ENCODE measurements at regions of chr21 and their contacts with region 1.

Region 1: GRCh38 chr21:29298348-29299045 is at the start of gene BACH1:
- DNase-seq: peak; percentile 71 to 92 (median 84)
- ATAC-seq: peak; percentile 67
- H3K4me3 ChIP-seq: peak within 1 kb of the TSS; percentile 63 to 68
- H3K4me3 Mint-ChIP-seq: peak within 1 kb of the TSS; percentile 87
- H3K27ac ChIP-seq: peak within 1 kb of the TSS; percentile 39 to 41
- H3K27ac Mint-ChIP-seq: peak within 1 kb of the TSS; percentile 88
- H3K4me1 ChIP-seq: peaks cover 54% of the 10 kb centered on the region
- H3K4me1 Mint-ChIP-seq: peaks cover 78% of the 10 kb centered on the region
- H3K27me3 ChIP-seq: no peaks in the 10 kb centered on the region
- H3K27me3 Mint-ChIP-seq: no peaks in the 10 kb centered on the region
- CTCF ChIP-seq: peak; percentile 33
- total RNA-seq, gene BACH1: 86.3 to 88.5 TPM

Region 2: DNA sequence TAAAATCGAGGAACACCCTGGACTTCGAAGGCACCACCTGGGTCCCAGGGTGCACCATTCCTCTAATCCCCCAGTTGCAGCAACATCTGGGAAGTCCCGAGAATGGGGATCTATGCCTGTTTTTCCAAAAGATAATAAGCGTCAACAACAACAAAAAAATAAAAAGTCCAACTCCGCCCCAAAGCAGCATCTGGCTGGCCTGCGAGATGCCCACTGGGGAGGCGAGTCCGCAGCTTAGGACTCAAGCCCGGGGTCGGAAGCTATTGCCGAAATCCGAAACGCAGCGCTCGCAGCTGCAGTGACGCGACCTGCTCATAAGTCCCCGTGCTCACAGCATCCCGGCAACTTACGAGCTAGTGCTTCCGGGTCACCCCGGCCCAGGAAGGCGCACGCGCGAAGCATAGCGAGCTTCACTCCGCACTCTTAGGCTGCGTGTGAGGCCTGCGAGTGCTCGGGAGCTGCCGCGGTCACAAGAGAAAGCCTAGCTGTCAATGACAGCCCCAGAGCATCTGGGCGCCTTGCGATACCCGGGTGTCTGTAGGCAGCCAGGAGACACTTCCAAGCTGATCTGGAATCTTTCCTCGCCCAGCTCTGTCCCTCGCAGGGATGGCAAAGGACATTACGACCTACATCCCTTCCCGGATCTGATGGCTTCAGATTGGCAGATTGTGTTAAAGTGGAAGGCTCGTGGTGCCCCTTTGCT is 295.9 kb before region 1 on chr21:
- CTCF ChIA-PET with region 1: no interaction called
- POLR2A ChIA-PET with region 1: interaction called, 3 read pairs
- intact Hi-C with region 1: loop called in 1 of 2 experiments (anchors 5 kb)
- DNase-seq: peak; percentile 90 to 99 (median 95)
- ATAC-seq: peak; percentile 100
- H3K4me3 ChIP-seq: peak overlapping the region; percentile 65 to 71
- H3K4me3 Mint-ChIP-seq: peak overlapping the region; percentile 93
- H3K27ac ChIP-seq: peak overlapping the region; percentile 93 to 94
- H3K27ac Mint-ChIP-seq: peak overlapping the region; percentile 99
- H3K4me1 ChIP-seq: peaks cover 8% of the 10 kb centered on the region
- H3K4me1 Mint-ChIP-seq: peaks cover 15% of the 10 kb centered on the region
- H3K27me3 ChIP-seq: no peaks in the 10 kb centered on the region
- H3K27me3 Mint-ChIP-seq: no peaks in the 10 kb centered on the region
- CTCF ChIP-seq: no peak

Region 3: DNA sequence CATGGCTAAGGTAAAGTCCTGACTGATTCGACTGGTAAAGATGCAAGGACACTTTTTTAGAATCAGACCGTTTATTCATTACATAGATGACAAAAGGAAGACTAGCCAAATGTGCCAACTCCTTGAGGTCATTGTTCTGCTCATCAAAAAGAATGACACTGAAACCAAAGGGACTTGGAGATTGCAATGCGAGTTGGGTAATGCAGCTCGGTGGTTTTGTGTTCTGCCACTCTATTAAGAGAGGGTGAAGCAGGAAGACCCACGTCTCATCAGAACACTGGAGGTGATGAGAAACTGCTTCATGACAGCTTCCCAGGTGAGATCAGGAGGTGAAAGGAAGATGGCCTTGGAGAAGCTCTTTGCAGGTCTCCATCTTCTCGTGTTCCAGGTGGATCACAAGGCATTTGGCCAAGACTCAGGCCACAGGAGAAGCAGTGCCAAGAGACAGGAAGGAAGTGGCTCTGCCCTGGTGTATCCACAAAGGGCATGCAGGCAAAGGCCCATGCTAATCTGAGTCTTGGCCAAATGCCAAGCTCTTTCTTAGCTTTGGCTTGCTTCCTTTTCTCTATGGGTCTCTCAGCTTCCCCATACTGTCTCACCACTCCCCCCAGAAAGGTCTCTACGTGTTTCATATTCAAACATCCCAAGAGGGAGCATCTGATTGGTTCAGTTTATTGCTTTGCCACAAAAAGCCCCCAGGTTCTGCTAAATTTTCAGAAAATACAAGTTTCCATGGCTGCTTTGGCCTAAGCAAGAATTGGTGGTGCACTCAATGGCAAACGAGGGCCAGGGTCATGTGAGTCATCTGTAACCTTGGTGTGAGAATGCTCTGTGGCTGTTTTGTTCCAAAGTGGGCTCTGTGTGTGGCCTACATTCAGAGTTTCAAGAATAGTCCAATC is 219.4 kb before region 1 on chr21:
- CTCF ChIA-PET with region 1: no interaction called
- POLR2A ChIA-PET with region 1: interaction called, 11 read pairs
- intact Hi-C with region 1: loop called in 1 of 2 experiments (anchors 2 kb)
- DNase-seq: peak in 6 of 9 experiments; percentile 21 to 72 (median 47)
- ATAC-seq: peak; percentile 18
- H3K4me3 ChIP-seq: peak overlapping the region in 1 of 2 experiments; percentile 8
- H3K4me3 Mint-ChIP-seq: peak overlapping the region; percentile 49
- H3K27ac ChIP-seq: peak overlapping the region; percentile 31 to 68
- H3K27ac Mint-ChIP-seq: peak overlapping the region; percentile 93
- H3K4me1 ChIP-seq: peaks cover 54% of the 10 kb centered on the region
- H3K4me1 Mint-ChIP-seq: peaks cover 66% of the 10 kb centered on the region
- H3K27me3 ChIP-seq: no peaks in the 10 kb centered on the region
- H3K27me3 Mint-ChIP-seq: no peaks in the 10 kb centered on the region
- CTCF ChIP-seq: no peak

Region 4: DNA sequence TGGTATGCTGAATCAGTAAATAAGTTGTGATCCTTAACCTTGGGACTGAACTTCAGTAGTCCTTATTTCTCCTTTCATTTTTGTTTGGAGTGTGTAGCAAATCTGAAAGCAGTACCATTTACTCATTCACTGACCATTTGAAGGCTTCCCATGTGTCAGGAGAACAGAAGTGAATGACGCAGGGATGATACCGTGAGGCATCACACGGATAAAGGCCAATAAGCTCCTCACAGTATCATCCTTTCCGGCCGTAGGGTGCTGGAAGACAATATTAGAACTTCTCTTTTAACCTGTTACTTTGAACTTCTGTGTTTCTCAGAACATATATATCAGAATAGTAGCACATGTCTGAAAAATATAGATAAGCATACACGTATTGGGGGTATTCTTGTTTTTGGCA is 21.5 kb after region 1 on chr21:
- CTCF ChIA-PET with region 1: interaction called, 4 read pairs
- POLR2A ChIA-PET with region 1: interaction called, 3 read pairs
- intact Hi-C with region 1: loop called in 1 of 2 experiments (anchors 2 kb)
- DNase-seq: no peak
- ATAC-seq: no peak
- H3K4me3 ChIP-seq: no peak overlapping the region
- H3K4me3 Mint-ChIP-seq: no peak overlapping the region
- H3K27ac ChIP-seq: no peak overlapping the region
- H3K27ac Mint-ChIP-seq: no peak overlapping the region
- H3K4me1 ChIP-seq: peaks cover 5% of the 10 kb centered on the region
- H3K4me1 Mint-ChIP-seq: peaks cover 44% of the 10 kb centered on the region
- H3K27me3 ChIP-seq: no peaks in the 10 kb centered on the region
- H3K27me3 Mint-ChIP-seq: no peaks in the 10 kb centered on the region
- CTCF ChIP-seq: no peak

Region 5: GRCh38 chr21:29433366-29434059 is 135.0 kb after region 1 on chr21:
- CTCF ChIA-PET with region 1: no interaction called
- POLR2A ChIA-PET with region 1: no interaction called
- intact Hi-C with region 1: no loop called
- DNase-seq: no peak
- ATAC-seq: no peak
- H3K4me3 ChIP-seq: no peak overlapping the region
- H3K4me3 Mint-ChIP-seq: no peak overlapping the region
- H3K27ac ChIP-seq: no peak overlapping the region
- H3K27ac Mint-ChIP-seq: no peak overlapping the region
- H3K4me1 ChIP-seq: peaks cover 19% of the 10 kb centered on the region
- H3K4me1 Mint-ChIP-seq: peaks cover 32% of the 10 kb centered on the region
- H3K27me3 ChIP-seq: no peaks in the 10 kb centered on the region
- H3K27me3 Mint-ChIP-seq: no peaks in the 10 kb centered on the region
- CTCF ChIP-seq: no peak

Region 6: DNA sequence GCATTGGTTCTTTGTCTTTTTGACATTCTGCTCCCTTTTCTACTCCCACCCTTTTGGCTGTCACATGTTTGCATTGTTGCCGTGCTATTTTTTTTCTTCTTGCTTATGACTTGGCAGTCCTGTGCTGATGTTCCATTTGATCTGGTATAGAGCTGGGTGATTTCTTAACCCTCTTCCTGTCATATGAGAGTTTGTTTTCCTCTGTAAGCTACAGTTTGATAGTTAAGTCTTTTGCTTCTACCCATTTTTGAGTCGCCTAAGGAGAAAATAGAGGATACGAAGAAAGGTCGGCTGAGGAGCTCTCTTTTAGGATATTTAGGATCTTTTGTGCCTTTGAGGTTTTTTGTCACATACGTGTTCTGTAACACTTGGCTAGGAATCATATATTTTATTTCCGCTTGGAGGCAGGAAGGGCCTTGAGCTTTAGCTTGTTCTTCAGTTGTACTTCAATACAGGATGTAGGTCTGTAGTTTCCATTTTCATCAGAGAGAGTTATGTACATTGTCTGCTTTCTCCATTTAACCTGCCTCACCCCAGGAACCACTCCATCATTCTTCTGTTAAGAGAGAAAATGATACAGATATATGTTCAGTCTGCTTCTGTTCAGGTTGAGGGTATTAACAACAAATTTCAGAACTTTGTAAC is 150.9 kb after region 1 on chr21:
- CTCF ChIA-PET with region 1: interaction called, 8 read pairs
- POLR2A ChIA-PET with region 1: interaction called, 7 read pairs
- intact Hi-C with region 1: loop called (anchors 5 kb)
- DNase-seq: peak in 3 of 9 experiments; percentile 41 to 69 (median 42)
- ATAC-seq: peak; percentile 84
- H3K4me3 ChIP-seq: no peak overlapping the region
- H3K4me3 Mint-ChIP-seq: peak overlapping the region; percentile 70
- H3K27ac ChIP-seq: peak overlapping the region; percentile 52 to 65
- H3K27ac Mint-ChIP-seq: peak overlapping the region; percentile 97
- H3K4me1 ChIP-seq: peaks cover 23% of the 10 kb centered on the region
- H3K4me1 Mint-ChIP-seq: peaks cover 40% of the 10 kb centered on the region
- H3K27me3 ChIP-seq: no peaks in the 10 kb centered on the region
- H3K27me3 Mint-ChIP-seq: no peaks in the 10 kb centered on the region
- CTCF ChIP-seq: no peak

Region 7: GRCh38 chr21:30257773-30258172 is 959.3 kb after region 1 on chr21:
- CTCF ChIA-PET with region 1: no interaction called
- POLR2A ChIA-PET with region 1: no interaction called
- intact Hi-C with region 1: no loop called
- DNase-seq: no peak
- ATAC-seq: no peak
- H3K4me3 ChIP-seq: no peak overlapping the region
- H3K4me3 Mint-ChIP-seq: no peak overlapping the region
- H3K27ac ChIP-seq: no peak overlapping the region
- H3K27ac Mint-ChIP-seq: no peak overlapping the region
- H3K4me1 ChIP-seq: no peaks in the 10 kb centered on the region
- H3K4me1 Mint-ChIP-seq: no peaks in the 10 kb centered on the region
- H3K27me3 ChIP-seq: no peaks in the 10 kb centered on the region
- H3K27me3 Mint-ChIP-seq: no peaks in the 10 kb centered on the region
- CTCF ChIP-seq: no peak

Region 8: GRCh38 chr21:30340441-30341241 is 1042.1 kb after region 1 on chr21:
- CTCF ChIA-PET with region 1: no interaction called
- POLR2A ChIA-PET with region 1: no interaction called
- intact Hi-C with region 1: no loop called
- DNase-seq: peak in 6 of 9 experiments; percentile 0 to 28 (median 18)
- ATAC-seq: no peak
- H3K4me3 ChIP-seq: no peak overlapping the region
- H3K4me3 Mint-ChIP-seq: no peak overlapping the region
- H3K27ac ChIP-seq: no peak overlapping the region
- H3K27ac Mint-ChIP-seq: no peak overlapping the region
- H3K4me1 ChIP-seq: no peaks in the 10 kb centered on the region
- H3K4me1 Mint-ChIP-seq: no peaks in the 10 kb centered on the region
- H3K27me3 ChIP-seq: no peaks in the 10 kb centered on the region
- H3K27me3 Mint-ChIP-seq: peaks cover 8% of the 10 kb centered on the region
- CTCF ChIP-seq: peak; percentile 65